ENCODE measurements at regions of chr7 and their contacts with region 1.

Region 1: GRCh38 chr7:99504603-99505323 is at the start of gene ZKSCAN5:
- DNase-seq: peak; percentile 82 to 99
- H3K4me3 ChIP-seq: peak within 1 kb of the TSS; percentile 71
- H3K27ac ChIP-seq: no peak within 1 kb of the TSS
- H3K4me1 ChIP-seq: peaks cover 14% of the 10 kb centered on the region
- H3K27me3 ChIP-seq: no peaks in the 10 kb centered on the region
- CTCF ChIP-seq: no peak; the same call in 1 of the 2 replicates
- total RNA-seq, gene ZKSCAN5: 10.0 and 13.2 TPM in 2 replicates

Region 2: GRCh38 chr7:99344061-99344647 is 160.6 kb before region 1 on chr7:
- CTCF ChIA-PET with region 1: no interaction called
- POLR2A ChIA-PET with region 1: no interaction called
- intact Hi-C with region 1: no loop called
- DNase-seq: no peak
- H3K4me3 ChIP-seq: no peak overlapping the region
- H3K27ac ChIP-seq: no peak overlapping the region
- H3K4me1 ChIP-seq: no peaks in the 10 kb centered on the region
- H3K27me3 ChIP-seq: no peaks in the 10 kb centered on the region
- CTCF ChIP-seq: no peak

Region 3: GRCh38 chr7:99472561-99473243 is 32.1 kb before region 1 on chr7 and contains the start of gene ZNF789:
- CTCF ChIA-PET with region 1: interaction called, 3 read pairs
- POLR2A ChIA-PET with region 1: interaction called, 3 read pairs
- intact Hi-C with region 1: loop called (anchors 1 kb)
- DNase-seq: peak; percentile 91 to 99
- H3K4me3 ChIP-seq: peak within 1 kb of the TSS; percentile 76
- H3K27ac ChIP-seq: peak within 1 kb of the TSS; percentile 89
- H3K4me1 ChIP-seq: peaks cover 10% of the 10 kb centered on the region
- H3K27me3 ChIP-seq: no peaks in the 10 kb centered on the region
- CTCF ChIP-seq: no peak
- total RNA-seq, gene ZNF789: 30.8 and 38.8 TPM in 2 replicates

Region 4: GRCh38 chr7:99562832-99563231 is 58.1 kb after region 1 on chr7:
- CTCF ChIA-PET with region 1: no interaction called
- POLR2A ChIA-PET with region 1: interaction called, 4 read pairs
- intact Hi-C with region 1: loop called (anchors 2 kb)
- DNase-seq: peak; percentile 80 to 95
- H3K4me3 ChIP-seq: no peak overlapping the region
- H3K27ac ChIP-seq: peak overlapping the region; percentile 60
- H3K4me1 ChIP-seq: peaks cover 30% of the 10 kb centered on the region
- H3K27me3 ChIP-seq: no peaks in the 10 kb centered on the region
- CTCF ChIP-seq: no peak

Region 5: GRCh38 chr7:99616359-99617191 is 111.8 kb after region 1 on chr7 and contains the start of gene ZSCAN25:
- CTCF ChIA-PET with region 1: interaction called, 4 read pairs
- POLR2A ChIA-PET with region 1: interaction called, 4 read pairs
- intact Hi-C with region 1: loop called (anchors 1 kb)
- DNase-seq: peak; percentile 79 to 91
- H3K4me3 ChIP-seq: peak within 1 kb of the TSS; percentile 66
- H3K27ac ChIP-seq: no peak within 1 kb of the TSS
- H3K4me1 ChIP-seq: peaks cover 24% of the 10 kb centered on the region
- H3K27me3 ChIP-seq: 0 out of 2 replicates have a peak, but pooled peaks cover 5% of the 10 kb centered on the region
- CTCF ChIP-seq: peak; percentile 60; the same call in 1 of the 2 replicates
- total RNA-seq, gene ZSCAN25: 20.5 and 21.8 TPM in 2 replicates

Region 6: GRCh38 chr7:101251871-101252659 is 1747.3 kb after region 1 on chr7:
- CTCF ChIA-PET with region 1: no interaction called
- POLR2A ChIA-PET with region 1: interaction called, 11 read pairs
- intact Hi-C with region 1: no loop called
- DNase-seq: peak; percentile 94 to 100
- H3K4me3 ChIP-seq: peak overlapping the region; percentile 74
- H3K27ac ChIP-seq: peak overlapping the region; percentile 48
- H3K4me1 ChIP-seq: peaks cover 17% of the 10 kb centered on the region
- H3K27me3 ChIP-seq: no peaks in the 10 kb centered on the region
- CTCF ChIP-seq: no peak

Measured in PC-9 (cell line).